GM12878 (cell line): ENCODE measurements at regions of chrX and their contacts with region 1.

Region 1: GRCh38 chrX:137166591-137166990 is 132.8 kb upstream of the GPR101 start:
- DNase-seq: no peak
- ATAC-seq: 0 out of 3 replicates have a peak, but pooled peaks have one; percentile 40
- H3K4me3 ChIP-seq: no peak overlapping the region
- H3K27ac ChIP-seq: no peak overlapping the region
- H3K4me1 ChIP-seq: no peaks in the 10 kb centered on the region
- H3K27me3 ChIP-seq: no peaks in the 10 kb centered on the region
- CTCF ChIP-seq: peak; percentile 28 to 59 (median 45); a peak in 5 of 6 replicates
- EP300 ChIP-seq: no peak
- POLR2A ChIP-seq: no peak
- RAD21 ChIP-seq: peak; percentile 28; the same call in 1 of the 2 replicates

Region 2: DNA sequence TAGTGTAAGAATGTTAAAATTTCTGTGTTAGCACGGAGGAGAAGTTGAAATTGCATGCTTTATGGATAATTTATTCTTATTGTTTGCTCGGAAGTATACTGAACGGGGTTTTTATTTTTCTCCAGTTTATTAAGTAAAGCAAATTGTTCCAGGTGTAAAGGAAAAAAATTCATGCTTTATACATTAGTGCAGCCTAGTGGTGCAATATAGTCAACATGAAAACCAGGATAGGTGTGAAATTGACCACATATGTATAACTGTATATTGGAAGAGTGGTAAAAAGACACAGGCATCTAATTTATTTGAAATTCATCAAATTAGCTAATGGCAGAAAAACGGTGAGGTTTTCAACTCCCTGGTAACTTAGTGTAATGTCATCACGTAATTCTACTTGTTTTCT is 677.9 kb before region 1 on chrX:
- CTCF ChIA-PET with region 1: no interaction called
- POLR2A ChIA-PET with region 1: no interaction called
- RAD21 ChIA-PET with region 1: no interaction called
- SMC1A ChIA-PET with region 1: no interaction called
- in situ Hi-C with region 1: no loop called
- intact Hi-C with region 1: no loop called
- DNase-seq: no peak
- ATAC-seq: no peak
- H3K4me3 ChIP-seq: no peak overlapping the region
- H3K27ac ChIP-seq: no peak overlapping the region
- H3K4me1 ChIP-seq: no peaks in the 10 kb centered on the region
- H3K27me3 ChIP-seq: no peaks in the 10 kb centered on the region; a peak in 2 of 4 replicates
- CTCF ChIP-seq: no peak
- EP300 ChIP-seq: no peak
- POLR2A ChIP-seq: no peak
- RAD21 ChIP-seq: no peak

Region 3: GRCh38 chrX:136639506-136640176 is 527.0 kb before region 1 on chrX:
- CTCF ChIA-PET with region 1: no interaction called
- POLR2A ChIA-PET with region 1: no interaction called
- RAD21 ChIA-PET with region 1: no interaction called
- SMC1A ChIA-PET with region 1: no interaction called
- in situ Hi-C with region 1: no loop called
- intact Hi-C with region 1: no loop called
- DNase-seq: no peak
- ATAC-seq: no peak
- H3K4me3 ChIP-seq: no peak overlapping the region
- H3K27ac ChIP-seq: no peak overlapping the region
- H3K4me1 ChIP-seq: peaks cover 12% of the 10 kb centered on the region
- H3K27me3 ChIP-seq: no peaks in the 10 kb centered on the region
- CTCF ChIP-seq: no peak
- EP300 ChIP-seq: no peak
- POLR2A ChIP-seq: no peak
- RAD21 ChIP-seq: no peak

Region 4: DNA sequence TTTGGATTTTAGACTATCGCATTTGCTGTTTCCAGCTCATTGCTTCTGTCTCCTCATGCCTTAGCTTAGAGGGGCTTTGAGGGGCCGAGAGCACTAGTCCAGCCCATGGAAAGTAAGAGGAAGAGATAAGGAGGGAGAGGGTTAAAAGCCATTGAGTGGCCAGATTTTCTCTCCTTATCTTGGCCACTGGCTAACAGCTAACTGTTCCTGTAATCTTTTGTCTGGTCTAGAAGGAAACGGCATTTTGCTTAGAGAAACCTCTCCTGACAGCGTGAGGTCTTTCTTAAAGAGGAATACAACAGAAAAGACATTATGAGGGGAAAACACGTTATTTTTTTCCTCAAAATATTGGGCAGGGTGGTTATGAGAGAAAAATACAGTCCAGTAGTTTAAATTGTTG is 140.7 kb before region 1 on chrX:
- CTCF ChIA-PET with region 1: no interaction called
- POLR2A ChIA-PET with region 1: no interaction called
- RAD21 ChIA-PET with region 1: no interaction called
- SMC1A ChIA-PET with region 1: no interaction called
- in situ Hi-C with region 1: no loop called
- intact Hi-C with region 1: no loop called
- DNase-seq: no peak
- ATAC-seq: no peak
- H3K4me3 ChIP-seq: no peak overlapping the region
- H3K27ac ChIP-seq: no peak overlapping the region
- H3K4me1 ChIP-seq: no peaks in the 10 kb centered on the region
- H3K27me3 ChIP-seq: peaks cover 0 to 6% of the 10 kb centered on the region in 2 experiments; a peak in 3 of 4 replicates
- CTCF ChIP-seq: no peak
- EP300 ChIP-seq: no peak
- POLR2A ChIP-seq: no peak
- RAD21 ChIP-seq: no peak

Region 5: DNA sequence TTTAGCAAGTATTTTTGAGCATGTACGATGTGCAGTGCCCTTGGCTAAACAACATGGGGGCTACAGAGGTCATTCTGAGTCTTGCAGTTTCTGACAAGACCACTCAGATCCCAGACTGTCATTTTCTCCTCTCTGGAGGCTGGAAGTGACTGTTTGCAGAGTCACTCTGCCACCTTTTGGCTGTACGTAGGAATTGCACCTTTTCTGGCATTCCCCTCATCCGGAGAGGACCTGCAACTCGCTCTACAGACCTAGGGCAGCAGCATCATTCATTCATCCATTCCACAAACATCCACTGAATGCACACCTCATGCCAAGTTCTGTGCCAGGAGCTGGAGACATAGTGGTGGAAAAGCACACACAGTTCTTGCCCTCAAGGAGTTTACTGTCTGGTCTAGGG is 27.6 kb after region 1 on chrX:
- CTCF ChIA-PET with region 1: interaction called, 18 read pairs
- POLR2A ChIA-PET with region 1: no interaction called
- RAD21 ChIA-PET with region 1: interaction called, 3 read pairs
- SMC1A ChIA-PET with region 1: interaction called, 8 read pairs
- in situ Hi-C with region 1: no loop called
- intact Hi-C with region 1: no loop called
- DNase-seq: peak; percentile 1
- ATAC-seq: peak; percentile 77
- H3K4me3 ChIP-seq: no peak overlapping the region
- H3K27ac ChIP-seq: no peak overlapping the region
- H3K4me1 ChIP-seq: no peaks in the 10 kb centered on the region
- H3K27me3 ChIP-seq: no peaks in the 10 kb centered on the region
- CTCF ChIP-seq: peak; percentile 54 to 64 (median 59); a peak in 5 of 6 replicates
- EP300 ChIP-seq: no peak
- POLR2A ChIP-seq: no peak
- RAD21 ChIP-seq: peak; percentile 62